ENCODE measurements at regions of chr3 and their contacts with region 1.

Region 1: GRCh38 chr3:114290911-114291901 is 2.6 kb upstream of the TIGIT start:
- DNase-seq: peak; percentile 88
- ATAC-seq: peak; percentile 85
- H3K4me3 Mint-ChIP-seq: peak overlapping the region; percentile 71
- H3K27ac Mint-ChIP-seq: peak overlapping the region; percentile 98
- H3K4me1 Mint-ChIP-seq: peaks cover 47% of the 10 kb centered on the region
- H3K27me3 Mint-ChIP-seq: no peaks in the 10 kb centered on the region
- CTCF ChIP-seq: peak; percentile 83

Region 2: GRCh38 chr3:113606539-113607218 is 684.5 kb before region 1 on chr3:
- CTCF ChIA-PET with region 1: no interaction called
- POLR2A ChIA-PET with region 1: no interaction called
- intact Hi-C with region 1: no loop called
- DNase-seq: peak; percentile 26
- ATAC-seq: peak; percentile 96
- H3K4me3 Mint-ChIP-seq: peak overlapping the region; percentile 52
- H3K27ac Mint-ChIP-seq: peak overlapping the region; percentile 72
- H3K4me1 Mint-ChIP-seq: peaks cover 25% of the 10 kb centered on the region
- H3K27me3 Mint-ChIP-seq: no peaks in the 10 kb centered on the region
- CTCF ChIP-seq: no peak

Region 3: GRCh38 chr3:114005481-114005880 is 285.7 kb before region 1 on chr3:
- CTCF ChIA-PET with region 1: no interaction called
- POLR2A ChIA-PET with region 1: interaction called, 3 read pairs
- intact Hi-C with region 1: loop called (anchors 10 kb)
- DNase-seq: peak; percentile 52
- ATAC-seq: peak; percentile 95
- H3K4me3 Mint-ChIP-seq: peak overlapping the region; percentile 76
- H3K27ac Mint-ChIP-seq: peak overlapping the region; percentile 97
- H3K4me1 Mint-ChIP-seq: peaks cover 61% of the 10 kb centered on the region
- H3K27me3 Mint-ChIP-seq: no peaks in the 10 kb centered on the region
- CTCF ChIP-seq: no peak

Region 4: GRCh38 chr3:114179575-114179974 is 111.6 kb before region 1 on chr3:
- CTCF ChIA-PET with region 1: interaction called, 9 read pairs
- POLR2A ChIA-PET with region 1: no interaction called
- intact Hi-C with region 1: loop called (anchors 1 kb)
- DNase-seq: no peak
- ATAC-seq: peak; percentile 50
- H3K4me3 Mint-ChIP-seq: no peak overlapping the region
- H3K27ac Mint-ChIP-seq: no peak overlapping the region
- H3K4me1 Mint-ChIP-seq: peaks cover 3% of the 10 kb centered on the region
- H3K27me3 Mint-ChIP-seq: peaks cover 9% of the 10 kb centered on the region
- CTCF ChIP-seq: no peak

Region 5: DNA sequence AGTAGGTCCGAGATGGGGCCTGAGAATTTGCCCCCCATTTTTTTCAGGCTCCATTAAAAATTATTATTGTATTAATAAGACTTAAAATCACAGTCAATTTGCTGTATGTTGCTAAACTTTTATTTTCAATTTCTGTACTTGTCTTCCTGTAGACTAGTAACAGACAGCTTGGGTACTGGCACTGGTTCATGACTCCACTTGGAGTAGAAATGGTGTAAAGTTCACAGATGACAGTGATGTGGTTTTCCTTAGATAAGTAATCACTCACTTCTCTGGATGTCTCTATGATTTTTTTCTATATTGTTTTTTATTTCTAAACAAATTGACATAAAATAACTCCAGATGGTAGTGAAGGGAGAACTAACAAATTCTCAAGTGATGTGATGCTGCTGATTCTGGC is 38.3 kb before region 1 on chr3:
- CTCF ChIA-PET with region 1: no interaction called
- POLR2A ChIA-PET with region 1: no interaction called
- intact Hi-C with region 1: no loop called
- DNase-seq: no peak
- ATAC-seq: no peak
- H3K4me3 Mint-ChIP-seq: no peak overlapping the region
- H3K27ac Mint-ChIP-seq: no peak overlapping the region
- H3K4me1 Mint-ChIP-seq: no peaks in the 10 kb centered on the region
- H3K27me3 Mint-ChIP-seq: no peaks in the 10 kb centered on the region
- CTCF ChIP-seq: no peak

Region 6: DNA sequence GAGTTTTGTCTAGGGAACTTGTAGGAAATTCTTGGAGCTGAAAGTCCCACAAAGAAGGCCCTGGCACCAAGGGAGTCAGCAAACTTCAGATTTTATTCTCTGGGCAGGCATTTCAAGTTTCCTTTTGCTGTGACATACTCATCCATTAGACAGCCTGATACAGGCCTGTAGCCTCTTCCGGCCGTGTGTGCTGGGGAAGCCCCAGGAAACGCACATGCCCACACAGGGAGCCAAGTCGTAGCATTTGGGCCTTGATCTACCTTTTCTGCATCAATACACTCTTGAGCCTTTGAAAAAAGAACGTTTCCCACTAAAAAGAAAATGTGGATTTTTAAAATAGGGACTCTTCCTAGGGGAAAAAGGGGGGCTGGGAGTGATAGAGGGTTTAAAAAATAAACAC is 17.6 kb after region 1 on chr3:
- CTCF ChIA-PET with region 1: interaction called, 22 read pairs
- POLR2A ChIA-PET with region 1: interaction called, 59 read pairs
- intact Hi-C with region 1: loop called (anchors 1 kb)
- DNase-seq: no peak
- ATAC-seq: peak; percentile 87
- H3K4me3 Mint-ChIP-seq: peak overlapping the region; percentile 6
- H3K27ac Mint-ChIP-seq: peak overlapping the region; percentile 89
- H3K4me1 Mint-ChIP-seq: peaks cover 51% of the 10 kb centered on the region
- H3K27me3 Mint-ChIP-seq: no peaks in the 10 kb centered on the region
- CTCF ChIP-seq: no peak

Region 7: GRCh38 chr3:114336122-114336697 is 45.0 kb after region 1 on chr3:
- CTCF ChIA-PET with region 1: interaction called, 18 read pairs
- POLR2A ChIA-PET with region 1: interaction called, 9 read pairs
- intact Hi-C with region 1: loop called (anchors 1 kb)
- DNase-seq: no peak
- ATAC-seq: no peak
- H3K4me3 Mint-ChIP-seq: no peak overlapping the region
- H3K27ac Mint-ChIP-seq: peak overlapping the region; percentile 59
- H3K4me1 Mint-ChIP-seq: peaks cover 43% of the 10 kb centered on the region
- H3K27me3 Mint-ChIP-seq: no peaks in the 10 kb centered on the region
- CTCF ChIP-seq: no peak

Region 8: DNA sequence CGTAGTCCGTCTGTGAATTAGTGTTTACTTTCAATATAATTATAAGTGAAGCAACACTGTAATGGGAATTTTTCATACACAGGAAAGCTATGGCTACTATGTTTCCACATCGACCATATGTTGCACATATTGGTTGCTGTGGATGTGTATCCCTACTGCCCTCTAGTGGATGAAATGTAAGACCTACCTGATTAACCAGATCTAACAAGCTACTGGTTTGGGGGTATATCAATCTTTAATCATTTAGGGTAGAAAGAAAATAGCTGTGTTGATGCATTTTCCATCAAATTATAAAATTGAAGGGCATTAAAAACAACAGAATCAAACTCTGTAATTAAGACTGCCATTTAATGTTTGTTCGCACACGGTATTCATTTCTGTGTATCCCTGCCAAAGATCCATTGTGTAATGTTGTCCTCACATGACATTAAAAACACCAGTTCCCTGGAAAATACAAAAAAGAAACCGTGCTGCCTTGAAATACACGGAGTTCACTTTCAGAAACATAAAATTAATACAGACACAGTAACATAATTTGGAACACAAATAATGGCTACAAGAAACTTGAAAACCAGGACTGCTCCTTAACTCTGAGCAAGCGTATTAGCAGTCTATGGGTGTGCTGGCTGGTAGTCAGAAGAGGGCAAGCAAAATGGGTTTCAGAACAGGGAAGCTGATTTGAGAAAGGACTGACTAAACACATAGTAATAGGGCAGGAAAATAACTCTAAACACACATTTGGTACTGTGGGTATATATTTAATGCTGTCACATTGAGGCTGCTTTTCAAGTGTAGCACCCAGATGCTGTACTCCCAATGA is 127.7 kb after region 1 on chr3:
- CTCF ChIA-PET with region 1: interaction called, 41 read pairs
- POLR2A ChIA-PET with region 1: interaction called, 19 read pairs
- intact Hi-C with region 1: loop called (anchors 1 kb)
- DNase-seq: no peak
- ATAC-seq: peak; percentile 75
- H3K4me3 Mint-ChIP-seq: peak overlapping the region; percentile 64
- H3K27ac Mint-ChIP-seq: peak overlapping the region; percentile 83
- H3K4me1 Mint-ChIP-seq: peaks cover 45% of the 10 kb centered on the region
- H3K27me3 Mint-ChIP-seq: no peaks in the 10 kb centered on the region
- CTCF ChIP-seq: peak; percentile 22

Region 9: GRCh38 chr3:114839476-114839875 is 548.3 kb after region 1 on chr3:
- CTCF ChIA-PET with region 1: no interaction called
- POLR2A ChIA-PET with region 1: no interaction called
- intact Hi-C with region 1: no loop called
- DNase-seq: no peak
- ATAC-seq: no peak
- H3K4me3 Mint-ChIP-seq: no peak overlapping the region
- H3K27ac Mint-ChIP-seq: no peak overlapping the region
- H3K4me1 Mint-ChIP-seq: no peaks in the 10 kb centered on the region
- H3K27me3 Mint-ChIP-seq: no peaks in the 10 kb centered on the region
- CTCF ChIP-seq: no peak

Region 10: GRCh38 chr3:115147329-115148141 is 856.3 kb after region 1 on chr3:
- CTCF ChIA-PET with region 1: no interaction called
- POLR2A ChIA-PET with region 1: no interaction called
- intact Hi-C with region 1: loop called (anchors 2 kb)
- DNase-seq: peak; percentile 81
- ATAC-seq: peak; percentile 77
- H3K4me3 Mint-ChIP-seq: peak overlapping the region; percentile 94
- H3K27ac Mint-ChIP-seq: peak overlapping the region; percentile 98
- H3K4me1 Mint-ChIP-seq: peaks cover 34% of the 10 kb centered on the region
- H3K27me3 Mint-ChIP-seq: no peaks in the 10 kb centered on the region
- CTCF ChIP-seq: no peak